Head of caudate nucleus (tissue), 42 donors: ENCODE measurements at regions of chr12 and their contacts with region 1.

Region 1: DNA sequence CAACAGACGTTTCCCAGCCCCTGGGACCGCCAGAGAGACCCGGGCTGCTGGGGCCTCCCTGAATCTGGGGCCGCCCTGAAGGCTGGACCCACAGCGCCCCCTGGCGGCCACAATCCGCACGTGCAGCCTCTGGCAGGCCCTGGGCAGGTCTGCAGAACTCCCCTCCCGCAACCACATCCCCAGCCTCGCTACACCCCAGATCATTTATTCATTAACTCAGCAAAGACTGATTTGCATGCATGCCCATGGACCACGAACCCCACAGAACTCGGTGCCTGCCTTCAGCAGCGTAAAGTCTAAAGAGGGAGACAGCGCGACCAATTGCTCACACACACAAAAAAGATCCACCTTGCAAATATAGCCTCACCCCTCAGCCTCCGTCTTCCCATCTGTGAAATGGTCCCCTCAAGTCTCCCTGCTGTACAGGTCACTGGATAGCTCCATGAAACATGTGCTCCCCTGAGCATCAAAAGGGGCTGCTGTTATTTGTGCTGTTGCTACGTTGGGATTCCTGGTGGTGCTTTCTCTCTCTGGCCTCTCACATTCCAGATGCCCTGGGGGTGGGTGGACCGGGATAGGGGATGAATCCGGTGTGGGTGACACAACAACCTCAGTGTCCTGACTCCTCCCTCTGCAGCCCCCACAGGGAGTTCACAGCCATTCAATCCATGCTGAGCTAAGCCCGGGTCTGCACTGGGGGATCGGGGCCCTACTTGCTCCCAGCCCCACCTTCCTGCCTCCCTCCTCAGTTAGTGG is 96.4 kb downstream of the SCARB1 start:
- DNase-seq: peak; percentile 57 to 95 (median 86)

Region 2: GRCh38 chr12:124036674-124037109 is 730.6 kb before region 1 on chr12:
- intact Hi-C with region 1: loop called (anchors 5 kb)
- DNase-seq: peak in 41 of 42 donors; percentile 16 to 85 (median 61)

Region 3: GRCh38 chr12:124347716-124348357 is 419.4 kb before region 1 on chr12:
- intact Hi-C with region 1: loop called (anchors 5 kb)
- DNase-seq: peak in 24 of 42 donors; percentile 25 to 72 (median 46)

Region 4: GRCh38 chr12:124388679-124389536 is 378.3 kb before region 1 on chr12:
- intact Hi-C with region 1: loop called (anchors 10 kb)
- DNase-seq: peak; percentile 78 to 95 (median 89)

Region 5: GRCh38 chr12:124814741-124815613 is 47.7 kb after region 1 on chr12:
- intact Hi-C with region 1: no loop called
- DNase-seq: peak in 10 of 42 donors; percentile 9 to 68 (median 34)